Mucosa of descending colon (tissue), 3 donors: ENCODE measurements at regions of chr6 and their contacts with region 1.

Region 1: DNA sequence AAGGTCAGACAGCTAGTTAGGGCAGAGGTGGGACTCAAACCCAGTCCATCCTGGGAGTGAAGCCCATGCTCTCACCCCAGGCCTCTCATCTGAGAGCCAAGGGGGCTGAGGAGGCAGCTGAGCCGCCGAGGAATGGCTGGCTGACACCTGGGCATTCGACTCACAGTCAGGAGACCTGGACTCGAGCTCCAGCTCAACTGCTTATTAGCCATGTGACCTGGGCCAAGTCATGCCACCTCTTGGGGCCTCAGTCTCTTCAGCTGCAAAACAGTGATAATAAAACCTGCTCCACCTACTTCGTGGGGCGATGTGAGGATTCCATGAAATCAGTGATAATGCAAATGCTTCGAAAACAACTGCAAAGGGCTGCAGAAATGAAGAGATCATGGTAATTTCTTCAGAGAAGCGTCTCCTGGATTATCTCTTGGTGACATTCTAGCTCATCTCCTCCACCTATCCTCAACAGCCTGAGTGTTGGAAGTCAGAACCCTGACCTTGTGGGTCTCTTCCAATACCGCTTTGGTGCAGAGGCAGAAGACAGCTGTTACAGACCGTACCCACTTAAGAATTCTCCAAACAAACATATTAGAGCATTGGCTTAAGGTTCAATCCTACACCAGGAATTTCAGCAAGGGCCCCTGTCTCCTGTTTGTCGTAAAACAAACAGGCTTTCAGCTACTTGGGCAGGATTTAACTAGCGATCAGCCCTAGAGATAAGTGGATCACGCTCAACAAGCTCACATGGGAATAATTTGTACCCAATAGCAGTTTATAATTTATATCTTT is 60.0 kb upstream of the PIM1 start:
- DNase-seq: no peak
- ATAC-seq: no peak
- H3K4me3 ChIP-seq: no peak overlapping the region
- H3K4me1 ChIP-seq: peaks cover 4% of the 10 kb centered on the region
- CTCF ChIP-seq: no peak

Region 2: DNA sequence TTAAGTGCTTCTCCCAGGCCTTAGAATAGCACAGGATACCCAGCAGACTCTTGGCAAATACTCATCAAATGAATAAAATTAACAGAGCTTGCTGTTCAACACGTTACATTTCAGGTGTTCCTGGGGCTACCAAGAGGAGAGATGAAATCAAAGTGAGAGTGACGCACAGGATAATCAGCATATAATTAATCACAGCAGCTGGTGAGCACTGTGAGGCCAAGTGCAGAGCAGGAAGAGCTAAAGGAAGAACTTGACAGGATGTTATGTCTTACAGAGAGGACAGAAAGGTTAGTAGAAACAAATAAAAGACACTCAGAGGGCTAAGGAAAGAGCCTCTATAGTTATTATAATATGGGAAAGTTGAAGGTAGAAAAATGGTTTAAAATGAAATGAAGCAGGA is 244.1 kb before region 1 on chr6:
- intact Hi-C with region 1: no loop called
- DNase-seq: no peak
- ATAC-seq: no peak
- H3K4me3 ChIP-seq: no peak overlapping the region
- H3K4me1 ChIP-seq: no peaks in the 10 kb centered on the region
- CTCF ChIP-seq: no peak

Region 3: DNA sequence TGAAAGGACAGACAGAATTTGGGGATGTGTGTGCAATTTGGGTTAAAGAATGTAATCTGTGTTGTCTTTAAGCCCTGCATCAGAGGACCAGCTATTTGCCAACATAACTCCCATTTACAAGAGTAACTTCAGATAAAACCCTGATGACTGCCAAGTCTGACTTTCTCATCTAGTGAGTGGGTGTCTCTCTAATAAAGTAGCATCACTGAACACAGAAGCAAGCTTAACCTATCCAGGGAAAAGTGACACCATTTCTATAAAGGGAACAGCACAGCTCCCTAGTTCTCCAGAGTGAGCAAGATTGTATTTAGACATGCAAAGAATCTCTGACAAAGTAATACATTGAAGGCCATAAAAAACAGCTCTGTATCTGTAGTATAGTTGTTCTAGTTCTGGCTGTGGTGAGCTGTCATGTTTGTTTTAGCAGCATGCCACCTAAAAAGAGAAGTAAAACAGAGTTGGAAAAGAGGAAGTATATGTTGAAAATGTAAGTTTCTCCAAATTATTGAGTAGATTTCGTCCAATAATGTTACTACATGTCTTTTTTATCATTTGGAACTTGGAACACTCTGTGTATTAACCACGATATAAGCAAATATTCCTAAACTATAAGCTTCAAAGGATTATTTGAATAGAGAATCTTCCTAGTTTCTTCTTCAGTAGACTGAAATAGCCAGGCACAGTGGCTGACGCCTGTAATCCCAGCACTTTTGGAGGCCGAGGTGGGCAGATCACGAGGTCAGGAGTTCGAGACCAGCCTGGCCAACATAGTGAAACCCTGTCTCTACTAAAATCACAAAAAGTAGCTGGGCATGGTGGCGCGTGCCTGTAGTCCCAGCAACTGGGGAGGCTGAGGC is 51.2 kb after region 1 on chr6:
- intact Hi-C with region 1: loop called in 1 of 2 experiments (anchors 5 kb)
- DNase-seq: no peak
- ATAC-seq: peak; percentile 83
- H3K4me3 ChIP-seq: no peak overlapping the region
- H3K4me1 ChIP-seq: peaks cover 19% of the 10 kb centered on the region
- CTCF ChIP-seq: no peak